Activated B cell treated with CpG ODN at 0.5 μM for 24 hours (primary cell): ENCODE measurements at regions of chr11 and their contacts with region 1.

Region 1: DNA sequence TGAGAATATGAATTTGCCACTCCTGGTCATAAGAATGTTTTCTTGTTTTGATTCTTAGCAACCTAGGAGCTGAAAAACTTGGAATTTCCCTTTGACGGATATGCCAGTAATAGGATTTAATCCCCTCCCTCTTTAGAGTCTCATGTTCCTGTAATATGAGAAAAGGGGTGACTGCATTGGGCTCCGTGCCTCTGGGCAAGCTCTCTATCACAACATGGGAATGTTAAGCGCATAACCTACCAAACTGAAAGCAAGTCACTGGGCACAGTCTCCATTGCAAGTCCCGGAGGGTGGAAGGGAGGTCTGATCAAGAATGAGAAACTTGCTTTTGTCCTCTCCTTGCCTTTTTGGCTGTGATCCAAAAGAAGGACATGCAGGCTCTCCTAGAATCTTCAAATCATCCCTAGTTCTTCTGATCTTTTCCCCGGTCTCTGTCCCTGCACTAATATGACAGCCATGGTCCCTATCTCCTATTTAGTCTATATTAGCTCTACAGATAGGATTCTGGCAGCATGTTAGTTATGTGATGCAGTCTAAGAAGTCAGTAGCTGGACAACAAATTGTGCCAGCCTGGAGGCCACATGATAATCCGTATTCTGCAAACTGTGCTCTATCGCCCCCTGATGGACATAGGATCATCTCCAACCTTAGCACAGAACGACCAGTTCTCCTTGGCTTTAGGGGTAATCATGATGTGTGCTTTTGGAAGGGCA is 11.7 kb downstream of the OR10D3 start:
- DNase-seq: no peak
- ATAC-seq: no peak
- H3K4me3 Mint-ChIP-seq: no peak overlapping the region
- H3K27ac Mint-ChIP-seq: no peak overlapping the region
- H3K4me1 Mint-ChIP-seq: peaks cover 2% of the 10 kb centered on the region
- H3K27me3 Mint-ChIP-seq: peaks cover 2% of the 10 kb centered on the region
- CTCF ChIP-seq: no peak

Region 2: DNA sequence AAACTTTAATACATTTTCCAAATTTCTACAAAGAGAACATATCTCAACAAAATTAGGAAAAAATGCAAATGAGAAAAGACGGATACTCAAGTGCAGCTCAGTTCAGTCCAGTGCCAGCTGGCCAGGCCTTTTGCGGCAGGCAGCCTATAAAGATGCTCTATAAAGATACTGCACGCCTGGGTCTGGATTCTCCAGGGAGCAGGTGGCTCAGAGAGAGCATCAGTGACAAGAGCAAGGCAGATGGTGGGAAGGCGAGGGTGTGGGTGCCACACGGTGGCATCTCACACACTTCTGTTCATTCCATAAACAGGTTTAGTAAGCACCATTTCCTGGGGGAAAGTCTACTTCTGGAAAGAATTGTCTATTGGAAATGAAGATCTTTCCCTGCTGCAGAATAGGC is 522.3 kb before region 1 on chr11:
- CTCF ChIA-PET with region 1: no interaction called
- POLR2A ChIA-PET with region 1: no interaction called
- intact Hi-C with region 1: no loop called
- DNase-seq: no peak
- ATAC-seq: no peak
- H3K4me3 Mint-ChIP-seq: no peak overlapping the region
- H3K27ac Mint-ChIP-seq: no peak overlapping the region
- H3K4me1 Mint-ChIP-seq: no peaks in the 10 kb centered on the region
- H3K27me3 Mint-ChIP-seq: peaks cover 3% of the 10 kb centered on the region
- CTCF ChIP-seq: no peak

Region 3: DNA sequence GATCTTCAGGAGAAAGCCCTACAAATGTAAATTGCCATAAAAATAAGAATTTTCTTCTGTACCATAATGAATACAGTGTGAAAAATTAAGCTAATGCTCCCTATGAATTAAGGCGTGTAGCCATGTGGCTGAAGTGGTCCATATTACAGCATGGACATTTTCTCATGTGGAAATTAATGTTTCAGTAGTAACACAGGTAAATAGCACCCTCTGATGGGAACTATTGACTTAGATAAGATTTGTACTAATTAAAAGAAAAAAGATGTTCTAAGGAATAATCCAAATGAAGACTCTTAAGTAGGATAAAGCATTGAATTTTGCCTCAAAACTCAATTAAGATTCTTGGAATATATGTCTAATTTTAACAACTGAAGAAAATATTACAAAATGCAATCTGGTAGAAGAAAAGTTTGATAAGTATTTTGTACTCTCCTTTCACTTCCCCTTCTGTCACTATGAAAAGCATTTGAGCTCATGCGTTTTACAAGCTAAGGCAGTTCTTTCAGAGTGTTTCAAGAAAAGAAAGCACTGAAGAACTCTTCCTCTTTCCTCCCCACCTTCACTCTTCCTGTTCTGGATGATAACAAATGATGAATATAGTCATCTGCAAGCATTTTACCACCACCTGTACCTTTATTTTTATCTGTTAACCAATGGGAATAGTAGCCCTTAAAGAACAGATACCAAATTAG is 135.1 kb after region 1 on chr11:
- CTCF ChIA-PET with region 1: no interaction called
- POLR2A ChIA-PET with region 1: no interaction called
- intact Hi-C with region 1: loop called (anchors 10 kb)
- DNase-seq: no peak
- ATAC-seq: peak; percentile 84
- H3K4me3 Mint-ChIP-seq: peak overlapping the region; percentile 19
- H3K27ac Mint-ChIP-seq: peak overlapping the region; percentile 55
- H3K4me1 Mint-ChIP-seq: peaks cover 49% of the 10 kb centered on the region
- H3K27me3 Mint-ChIP-seq: no peaks in the 10 kb centered on the region
- CTCF ChIP-seq: no peak